ENCODE measurements at regions of chr3 and their contacts with region 1.

Region 1: GRCh38 chr3:129160891-129161859 is at the start of gene ISY1:
- DNase-seq: peak; percentile 91 to 95
- ATAC-seq: peak; percentile 87 to 89
- H3K4me3 ChIP-seq: peak within 1 kb of the TSS; percentile 85
- H3K27ac ChIP-seq: peak within 1 kb of the TSS; percentile 95 to 100
- H3K4me1 ChIP-seq: peaks cover 16% of the 10 kb centered on the region; the same call in 2 of the 3 replicates
- CTCF ChIP-seq: peak; percentile 58
- EP300 ChIP-seq: no peak
- POLR2A ChIP-seq: peak; percentile 36; the same call in 1 of the 2 replicates
- RAD21 ChIP-seq: peak; percentile 32 to 42; a peak in 3 of 5 replicates
- polyA plus RNA-seq, gene ISY1: 21.3 and 27.6 TPM in 2 replicates

Region 2: DNA sequence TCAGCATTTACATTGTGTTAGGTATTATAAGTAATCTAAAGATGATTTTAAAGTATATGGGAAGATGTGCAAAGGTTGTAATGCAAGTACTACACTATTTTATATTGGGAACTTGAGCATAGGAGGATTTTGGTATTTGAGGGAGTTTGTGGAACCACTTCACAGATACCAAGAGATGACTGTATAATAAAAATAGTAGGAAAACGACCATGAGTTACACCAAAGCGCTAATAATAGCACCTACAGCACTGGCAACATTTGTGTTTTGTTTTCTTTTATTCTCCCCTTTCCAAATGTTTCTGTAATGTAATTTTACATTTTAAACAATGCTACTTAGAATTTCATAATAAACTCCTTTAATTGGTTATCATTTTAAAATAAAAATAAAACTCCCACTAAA is 12.0 kb after region 1 on chr3:
- CTCF ChIA-PET with region 1: interaction called, 22 read pairs
- POLR2A ChIA-PET with region 1: interaction called, 3 read pairs
- DNase-seq: no peak
- ATAC-seq: no peak
- H3K4me3 ChIP-seq: no peak overlapping the region
- H3K27ac ChIP-seq: no peak overlapping the region
- H3K4me1 ChIP-seq: peaks cover 13% of the 10 kb centered on the region
- CTCF ChIP-seq: no peak
- EP300 ChIP-seq: no peak
- POLR2A ChIP-seq: no peak
- RAD21 ChIP-seq: no peak

Region 3: DNA sequence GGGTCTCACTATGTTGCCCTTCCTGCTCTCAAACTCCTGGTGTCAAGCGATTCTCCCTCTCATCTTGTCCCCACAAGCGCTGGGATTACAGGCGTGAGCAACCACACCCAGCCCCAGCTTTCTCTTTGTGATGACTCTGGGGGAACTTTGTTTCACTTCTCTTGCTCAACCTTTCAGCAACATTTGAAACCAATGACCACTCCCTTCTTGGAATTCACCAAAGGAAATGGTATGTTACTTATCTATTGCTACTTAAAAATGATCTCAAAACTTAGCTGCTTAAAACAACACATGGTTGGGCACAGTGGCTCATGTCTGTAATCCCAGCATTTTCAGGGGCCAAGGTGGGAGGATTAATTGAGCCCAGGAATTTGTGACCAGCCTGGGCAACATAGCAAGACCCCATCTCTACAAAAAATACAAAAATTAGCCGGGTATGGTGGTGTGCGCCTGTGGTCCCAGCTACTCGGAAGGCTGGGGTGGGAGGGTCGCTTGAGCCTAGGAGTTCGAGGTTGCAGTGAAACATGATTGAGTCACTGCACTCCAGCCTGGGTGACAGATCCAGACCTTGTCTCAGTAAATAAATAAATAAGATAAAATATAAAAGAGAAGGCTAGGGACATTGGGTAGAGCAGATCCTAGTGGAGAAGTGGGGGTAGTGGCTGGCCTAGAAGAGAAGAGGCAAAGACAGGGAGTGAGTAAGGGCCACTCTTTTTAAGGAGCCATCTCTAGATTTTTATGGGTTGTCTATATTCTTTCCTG is 78.0 kb after region 1 on chr3:
- CTCF ChIA-PET with region 1: interaction called, 11 read pairs
- POLR2A ChIA-PET with region 1: interaction called, 3 read pairs
- DNase-seq: peak in 1 of 2 experiments; percentile 43
- ATAC-seq: peak in 1 of 2 experiments; percentile 59; a peak in 3 of 6 replicates
- H3K4me3 ChIP-seq: no peak overlapping the region
- H3K27ac ChIP-seq: peak overlapping the region; percentile 53 to 63; a peak in 5 of 6 replicates
- H3K4me1 ChIP-seq: peaks cover 21% of the 10 kb centered on the region
- CTCF ChIP-seq: no peak
- EP300 ChIP-seq: no peak
- POLR2A ChIP-seq: no peak
- RAD21 ChIP-seq: no peak